MCF 10A (cell line): ENCODE measurements at regions of chr12 and their contacts with region 1.

Region 1: DNA sequence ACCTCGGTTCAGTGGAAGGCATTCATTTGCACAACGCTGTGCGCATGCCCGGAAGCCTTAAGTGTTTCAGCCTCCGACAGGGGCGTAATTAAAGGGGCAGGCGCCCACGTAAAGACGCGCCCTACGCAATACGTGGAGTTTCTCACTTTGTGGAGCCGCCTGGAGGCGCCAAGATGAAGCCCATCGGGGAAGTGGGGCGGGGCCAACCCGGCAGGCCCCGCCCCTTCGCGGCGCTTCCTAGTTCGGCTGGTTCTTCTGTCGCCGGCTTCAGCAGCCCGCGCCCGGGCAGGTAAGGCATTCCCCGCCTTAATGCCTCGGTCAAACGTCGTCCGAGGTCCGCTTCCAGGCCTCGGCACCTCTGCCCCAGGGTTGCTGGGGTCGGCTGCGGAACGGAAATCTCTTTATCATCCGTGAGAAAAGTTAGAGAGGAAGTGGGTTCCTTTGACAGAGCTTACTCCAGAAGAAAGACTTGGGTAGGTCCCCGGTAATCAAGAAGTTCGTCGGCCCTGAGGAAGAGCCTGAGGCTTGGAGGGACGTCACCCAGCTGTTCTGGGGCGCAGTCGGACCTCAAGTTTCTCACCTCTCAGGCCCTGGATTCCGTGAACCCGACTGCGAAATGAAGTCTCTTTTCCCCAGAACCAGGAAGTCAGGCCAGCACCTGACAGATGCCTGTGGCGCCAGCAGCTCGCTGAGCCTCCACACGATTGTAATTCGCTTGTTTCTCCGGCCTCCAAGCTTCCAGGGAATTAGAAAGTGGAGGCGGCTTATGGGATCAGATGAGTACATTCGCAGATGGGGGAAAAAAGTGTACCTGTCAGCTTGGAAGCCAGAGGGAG is at the starts of genes IRAK4 and PUS7L:
- DNase-seq: peak; percentile 98
- H3K4me3 Mint-ChIP-seq: peak within 1 kb of the TSS; percentile 87
- H3K27ac Mint-ChIP-seq: peak within 1 kb of the TSS; percentile 84
- H3K4me1 Mint-ChIP-seq: peaks cover 30% of the 10 kb centered on the region
- H3K27me3 Mint-ChIP-seq: no peaks in the 10 kb centered on the region
- CTCF ChIP-seq: peak; percentile 27
- total RNA-seq, gene IRAK4: 10.1 and 12.2 TPM in 2 replicates
- total RNA-seq, gene PUS7L: 15.9 and 26.5 TPM in 2 replicates

Region 2: GRCh38 chr12:43151441-43151981 is 607.4 kb before region 1 on chr12:
- CTCF ChIA-PET with region 1: no interaction called
- POLR2A ChIA-PET with region 1: no interaction called
- intact Hi-C with region 1: no loop called
- DNase-seq: no peak
- H3K4me3 Mint-ChIP-seq: no peak overlapping the region
- H3K27ac Mint-ChIP-seq: no peak overlapping the region
- H3K4me1 Mint-ChIP-seq: peaks cover 21% of the 10 kb centered on the region
- H3K27me3 Mint-ChIP-seq: no peaks in the 10 kb centered on the region
- CTCF ChIP-seq: no peak

Region 3: DNA sequence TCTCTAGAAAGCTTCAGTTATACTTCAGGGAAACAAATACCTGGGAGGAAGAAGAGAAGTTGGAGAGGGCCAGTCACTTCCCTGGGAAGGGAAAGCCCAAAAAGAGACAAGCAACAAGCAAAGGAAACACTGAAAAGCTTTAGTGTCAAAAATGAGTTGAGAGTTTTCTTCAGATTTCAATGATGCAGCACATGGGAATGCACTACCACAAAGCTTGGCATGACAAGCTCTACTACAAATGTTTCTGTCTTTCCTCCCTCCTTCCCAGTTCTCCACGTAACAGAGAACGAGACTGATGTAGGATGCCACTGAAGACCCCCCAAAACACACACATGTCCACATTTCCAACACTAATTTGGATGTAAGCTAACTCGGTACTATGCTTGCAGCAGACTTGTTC is 180.2 kb before region 1 on chr12:
- CTCF ChIA-PET with region 1: no interaction called
- POLR2A ChIA-PET with region 1: no interaction called
- intact Hi-C with region 1: no loop called
- DNase-seq: peak; percentile 2
- H3K4me3 Mint-ChIP-seq: no peak overlapping the region
- H3K27ac Mint-ChIP-seq: no peak overlapping the region
- H3K4me1 Mint-ChIP-seq: no peaks in the 10 kb centered on the region
- H3K27me3 Mint-ChIP-seq: peaks cover 60% of the 10 kb centered on the region
- CTCF ChIP-seq: no peak

Region 4: DNA sequence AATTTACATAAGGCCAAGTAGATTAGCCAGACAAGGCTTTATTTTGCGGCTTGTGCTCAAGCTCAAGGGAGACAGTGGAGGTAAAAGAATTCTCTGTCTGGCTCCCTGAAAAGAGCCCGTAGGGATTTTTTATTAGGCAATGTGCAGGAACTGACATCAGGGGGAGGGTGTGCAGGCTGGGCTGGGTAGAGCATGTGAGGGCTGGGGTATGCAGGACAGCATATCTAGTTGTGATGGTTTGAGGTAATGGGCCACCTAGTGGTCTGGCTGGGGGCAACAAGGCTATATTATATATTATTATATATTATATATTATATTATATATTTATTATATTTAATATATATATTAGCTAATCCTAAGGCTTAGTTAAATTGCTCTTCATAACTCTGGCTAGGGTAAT is 179.0 kb after region 1 on chr12:
- CTCF ChIA-PET with region 1: no interaction called
- POLR2A ChIA-PET with region 1: no interaction called
- intact Hi-C with region 1: loop called (anchors 1 kb)
- DNase-seq: peak; percentile 6
- H3K4me3 Mint-ChIP-seq: no peak overlapping the region
- H3K27ac Mint-ChIP-seq: no peak overlapping the region
- H3K4me1 Mint-ChIP-seq: no peaks in the 10 kb centered on the region
- H3K27me3 Mint-ChIP-seq: no peaks in the 10 kb centered on the region
- CTCF ChIP-seq: peak; percentile 24